Activated CD4-positive, alpha-beta memory T cell treated with anti-CD3 and anti-CD28 coated beads for 36 hours (primary cell): ENCODE measurements at regions of chr10 and their contacts with region 1.

Region 1: DNA sequence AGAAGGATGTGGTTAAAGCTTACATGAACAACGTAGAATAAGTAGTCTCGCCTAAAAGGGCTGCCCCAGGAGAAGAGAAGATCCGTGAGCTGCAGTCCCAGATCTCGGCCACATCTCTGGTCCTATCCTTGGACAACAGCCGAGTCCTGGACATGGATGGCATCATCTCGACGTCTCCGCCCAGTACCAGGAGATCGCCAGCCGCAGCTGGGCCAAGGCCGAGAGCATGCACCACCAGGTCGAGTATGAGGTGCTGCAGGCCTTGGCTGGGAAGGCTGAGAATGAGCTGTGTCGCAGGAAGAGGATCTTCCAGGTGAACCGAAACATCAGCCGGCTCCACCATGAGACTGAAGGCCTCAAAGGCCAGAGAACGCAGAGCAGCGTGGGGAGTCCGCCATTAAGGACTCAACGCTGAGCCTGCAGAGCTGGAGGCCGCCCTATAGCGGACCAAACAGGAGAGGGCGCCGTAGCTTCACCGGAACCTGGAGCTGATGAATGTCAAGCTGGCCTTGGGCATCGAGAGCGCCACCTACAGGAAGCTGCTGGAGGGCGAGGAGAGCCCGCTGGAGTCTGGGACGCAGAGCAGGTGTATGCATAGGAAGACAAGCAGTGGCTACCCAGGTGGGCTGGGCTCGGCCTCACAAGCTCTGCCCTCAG is 22.2 kb downstream of the LIPK start:
- DNase-seq: peak; percentile 76
- H3K4me3 Mint-ChIP-seq: no peak overlapping the region
- H3K27ac Mint-ChIP-seq: no peak overlapping the region
- H3K4me1 Mint-ChIP-seq: no peaks in the 10 kb centered on the region
- H3K27me3 Mint-ChIP-seq: peaks cover 1% of the 10 kb centered on the region

Region 2: DNA sequence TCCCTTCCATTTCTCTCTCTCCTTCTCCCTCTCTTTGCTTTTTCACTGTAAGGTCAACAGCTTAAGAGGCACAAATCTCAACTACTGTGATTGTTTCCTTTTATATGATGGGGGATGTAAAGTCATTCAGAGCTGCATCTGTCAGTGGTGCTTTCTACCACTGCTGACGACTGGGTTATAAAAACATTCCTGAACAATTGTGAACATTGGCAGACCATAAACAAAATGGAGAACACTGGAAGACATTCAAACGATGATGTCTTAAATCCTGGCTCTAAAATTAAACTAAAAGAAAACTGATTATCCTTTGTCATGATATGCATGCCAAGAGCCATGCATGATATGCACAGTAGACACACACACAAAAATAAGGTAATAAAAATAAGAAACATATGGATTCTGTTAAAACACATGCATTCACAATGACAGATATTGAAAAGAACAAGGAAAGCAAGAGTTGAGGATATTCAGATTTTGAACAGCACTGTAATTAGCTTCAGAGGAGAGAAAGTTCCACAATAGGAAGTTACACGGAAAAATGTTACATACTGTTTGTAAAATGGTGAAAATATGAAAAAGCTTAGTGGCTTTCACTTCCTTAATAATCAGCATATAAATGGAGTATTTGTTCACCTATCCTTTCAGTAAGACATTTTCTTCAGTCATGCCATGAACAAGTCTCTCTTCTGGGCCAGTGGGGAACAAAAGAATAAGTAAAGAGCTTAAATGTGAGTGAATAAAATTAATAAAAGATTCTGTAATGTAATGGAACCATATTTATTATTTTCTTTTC is 234.3 kb before region 1 on chr10:
- CTCF ChIA-PET with region 1: no interaction called
- POLR2A ChIA-PET with region 1: no interaction called
- intact Hi-C with region 1: no loop called
- DNase-seq: no peak
- H3K4me3 Mint-ChIP-seq: no peak overlapping the region
- H3K27ac Mint-ChIP-seq: no peak overlapping the region
- H3K4me1 Mint-ChIP-seq: peaks cover 6% of the 10 kb centered on the region
- H3K27me3 Mint-ChIP-seq: no peaks in the 10 kb centered on the region

Region 3: GRCh38 chr10:88565072-88565471 is 163.2 kb before region 1 on chr10:
- CTCF ChIA-PET with region 1: interaction called, 10 read pairs
- POLR2A ChIA-PET with region 1: no interaction called
- intact Hi-C with region 1: no loop called
- DNase-seq: no peak
- H3K4me3 Mint-ChIP-seq: no peak overlapping the region
- H3K27ac Mint-ChIP-seq: no peak overlapping the region
- H3K4me1 Mint-ChIP-seq: peaks cover 5% of the 10 kb centered on the region
- H3K27me3 Mint-ChIP-seq: no peaks in the 10 kb centered on the region

Region 4: GRCh38 chr10:88672041-88672440 is 56.2 kb before region 1 on chr10:
- CTCF ChIA-PET with region 1: no interaction called
- POLR2A ChIA-PET with region 1: no interaction called
- intact Hi-C with region 1: no loop called
- DNase-seq: no peak
- H3K4me3 Mint-ChIP-seq: no peak overlapping the region
- H3K27ac Mint-ChIP-seq: no peak overlapping the region
- H3K4me1 Mint-ChIP-seq: peaks cover 18% of the 10 kb centered on the region
- H3K27me3 Mint-ChIP-seq: peaks cover 7% of the 10 kb centered on the region

Region 5: DNA sequence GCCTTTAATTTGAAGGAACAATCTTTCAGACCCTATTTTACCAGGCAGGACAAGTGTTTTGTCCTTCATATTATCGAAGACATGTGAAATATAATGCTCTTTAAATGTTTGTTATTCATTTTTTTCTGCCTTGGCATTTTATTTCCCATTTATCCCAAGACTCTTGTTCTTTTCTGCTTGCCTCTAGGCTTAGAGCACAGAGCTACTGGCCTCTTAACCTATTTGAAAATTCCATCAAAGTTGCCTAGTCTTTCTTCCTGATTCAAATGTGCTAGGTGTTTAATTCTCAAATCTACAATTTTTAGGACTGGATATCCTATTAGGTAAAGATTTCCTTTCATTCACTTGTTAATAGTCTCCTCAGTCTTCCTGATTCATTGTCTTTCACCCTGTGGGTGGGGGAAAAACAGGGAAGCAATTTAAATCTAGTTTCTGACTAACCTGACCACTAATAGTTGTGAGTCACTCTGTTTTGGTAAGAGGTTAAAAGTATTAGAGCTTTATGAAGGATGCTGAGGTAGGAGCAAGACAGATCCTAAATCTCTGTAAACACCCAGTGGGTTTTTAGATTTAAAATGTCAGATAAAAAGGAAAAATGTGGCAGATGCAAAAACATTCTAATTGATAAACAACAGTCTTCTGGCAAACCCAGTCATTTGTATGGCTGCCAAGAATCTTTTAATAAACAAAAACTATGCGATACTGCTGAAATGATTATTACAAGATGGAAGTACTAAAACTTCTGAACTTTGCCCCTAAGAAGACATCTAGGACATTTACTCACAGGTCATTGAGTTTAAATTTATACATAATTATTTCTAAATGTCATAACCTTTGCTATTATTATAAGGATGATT is 20.6 kb before region 1 on chr10:
- CTCF ChIA-PET with region 1: no interaction called
- POLR2A ChIA-PET with region 1: no interaction called
- intact Hi-C with region 1: no loop called
- DNase-seq: no peak
- H3K4me3 Mint-ChIP-seq: no peak overlapping the region
- H3K27ac Mint-ChIP-seq: no peak overlapping the region
- H3K4me1 Mint-ChIP-seq: peaks cover 14% of the 10 kb centered on the region
- H3K27me3 Mint-ChIP-seq: peaks cover 4% of the 10 kb centered on the region